ENCODE measurements at regions of chr10 and their contacts with region 1.

Region 1: GRCh38 chr10:70575874-70576802 is 26.4 kb downstream of the PRF1 start:
- DNase-seq: peak; percentile 46
- ATAC-seq: peak; percentile 10
- H3K4me3 Mint-ChIP-seq: no peak overlapping the region
- H3K27ac Mint-ChIP-seq: peak overlapping the region; percentile 40
- H3K4me1 Mint-ChIP-seq: peaks cover 44% of the 10 kb centered on the region
- H3K27me3 Mint-ChIP-seq: no peaks in the 10 kb centered on the region

Region 2: GRCh38 chr10:70169649-70170364 is 406.3 kb before region 1 on chr10:
- CTCF ChIA-PET with region 1: no interaction called
- POLR2A ChIA-PET with region 1: no interaction called
- intact Hi-C with region 1: loop called in 1 of 2 experiments (anchors 5 kb)
- DNase-seq: no peak
- ATAC-seq: peak; percentile 5
- H3K4me3 Mint-ChIP-seq: peak overlapping the region; percentile 94
- H3K27ac Mint-ChIP-seq: peak overlapping the region; percentile 84
- H3K4me1 Mint-ChIP-seq: peaks cover 64% of the 10 kb centered on the region
- H3K27me3 Mint-ChIP-seq: no peaks in the 10 kb centered on the region

Region 3: GRCh38 chr10:70404036-70404786 is 171.9 kb before region 1 on chr10 and contains the start of gene EIF4EBP2:
- CTCF ChIA-PET with region 1: no interaction called
- POLR2A ChIA-PET with region 1: no interaction called
- intact Hi-C with region 1: loop called in 1 of 2 experiments (anchors 5 kb)
- DNase-seq: peak; percentile 99
- ATAC-seq: peak; percentile 91
- H3K4me3 Mint-ChIP-seq: peak within 1 kb of the TSS; percentile 94
- H3K27ac Mint-ChIP-seq: peak within 1 kb of the TSS; percentile 91
- H3K4me1 Mint-ChIP-seq: peaks cover 37% of the 10 kb centered on the region
- H3K27me3 Mint-ChIP-seq: no peaks in the 10 kb centered on the region
- total RNA-seq, gene EIF4EBP2: 24.4 to 27.7 TPM

Region 4: GRCh38 chr10:70558871-70559810 is 17.0 kb before region 1 on chr10:
- CTCF ChIA-PET with region 1: interaction called, 3 read pairs
- POLR2A ChIA-PET with region 1: no interaction called
- intact Hi-C with region 1: loop called (anchors 1 to 2 kb)
- DNase-seq: peak; percentile 87
- ATAC-seq: peak; percentile 95
- H3K4me3 Mint-ChIP-seq: peak overlapping the region; percentile 60
- H3K27ac Mint-ChIP-seq: peak overlapping the region; percentile 23
- H3K4me1 Mint-ChIP-seq: peaks cover 12% of the 10 kb centered on the region
- H3K27me3 Mint-ChIP-seq: no peaks in the 10 kb centered on the region

Region 5: DNA sequence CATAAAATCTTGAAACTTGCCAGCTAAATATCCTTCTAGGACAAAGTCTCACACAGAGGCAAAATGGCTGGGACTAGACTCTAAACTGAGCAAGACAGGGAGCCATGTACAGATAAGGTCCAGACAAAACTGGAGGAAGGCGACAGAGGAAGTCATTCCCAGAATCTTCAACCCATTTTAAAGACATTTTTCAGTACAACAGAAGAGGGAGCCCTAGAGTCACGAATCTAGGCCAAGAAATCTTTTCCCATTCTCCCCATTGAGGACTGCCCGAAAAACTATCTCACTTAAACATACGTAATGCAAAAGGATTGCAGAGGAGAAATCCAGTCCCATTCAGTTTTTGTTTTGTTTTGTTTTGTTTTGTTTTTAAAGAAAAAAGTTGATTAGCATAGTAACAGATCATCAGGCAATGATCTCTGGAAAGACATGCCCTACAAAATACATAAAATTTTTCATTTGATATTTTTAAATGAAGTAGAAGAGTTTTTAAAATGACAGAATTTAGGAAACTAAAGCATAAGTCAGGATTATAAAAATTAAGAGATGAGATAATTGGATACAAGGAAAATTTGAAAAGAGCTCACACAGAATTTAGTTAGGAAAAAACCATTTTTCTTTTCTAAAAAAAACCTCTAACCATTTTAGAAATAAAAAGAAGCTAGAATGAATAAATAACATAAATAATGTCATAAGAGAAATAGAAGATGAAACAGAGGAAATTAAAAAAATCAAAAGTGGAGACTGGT is 43.3 kb after region 1 on chr10:
- CTCF ChIA-PET with region 1: interaction called, 5 read pairs
- POLR2A ChIA-PET with region 1: no interaction called
- intact Hi-C with region 1: loop called (anchors 1 to 5 kb)
- DNase-seq: no peak
- ATAC-seq: no peak
- H3K4me3 Mint-ChIP-seq: no peak overlapping the region
- H3K27ac Mint-ChIP-seq: no peak overlapping the region
- H3K4me1 Mint-ChIP-seq: peaks cover 16% of the 10 kb centered on the region
- H3K27me3 Mint-ChIP-seq: peaks cover 10% of the 10 kb centered on the region

Region 6: DNA sequence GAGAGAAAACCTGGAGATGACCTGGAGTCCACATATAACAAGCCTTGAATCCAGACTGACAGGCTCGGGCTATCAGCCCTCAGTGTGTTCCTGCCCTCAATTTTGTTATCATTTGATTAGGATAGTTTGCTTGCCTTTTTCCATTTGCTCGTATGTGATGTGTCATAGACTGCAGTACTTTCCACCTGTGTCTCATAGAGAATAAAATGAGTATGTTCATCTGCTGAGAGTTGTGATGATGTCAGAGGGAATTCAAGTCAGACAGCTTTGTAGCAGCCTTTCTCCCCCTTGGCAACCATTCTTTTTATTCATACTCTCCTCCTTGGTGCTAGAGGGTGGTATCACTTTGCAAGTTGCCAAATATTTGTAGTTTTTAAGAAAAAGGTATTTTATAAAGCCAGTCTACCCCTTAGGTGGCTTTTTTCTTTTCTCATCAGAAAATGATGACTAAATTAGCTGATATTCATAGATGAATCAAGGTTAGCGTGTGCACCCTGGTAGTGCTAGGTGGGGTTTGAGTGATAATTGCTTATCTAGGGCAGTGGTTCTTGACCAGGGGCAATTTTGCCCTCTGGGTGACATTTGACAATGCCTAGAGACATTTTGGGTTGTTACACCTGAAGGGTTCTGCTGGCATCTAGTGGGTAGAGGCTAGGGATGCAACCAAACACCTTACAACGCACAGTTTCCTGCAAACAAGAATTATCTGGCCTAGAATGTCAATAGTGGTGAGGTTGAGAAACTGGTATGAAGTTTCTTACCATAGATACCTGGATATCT is 245.0 kb after region 1 on chr10:
- CTCF ChIA-PET with region 1: interaction called, 3 read pairs
- POLR2A ChIA-PET with region 1: interaction called, 3 read pairs
- intact Hi-C with region 1: loop called in 1 of 2 experiments (anchors 1 kb)
- DNase-seq: peak; percentile 48
- ATAC-seq: peak; percentile 90
- H3K4me3 Mint-ChIP-seq: peak overlapping the region; percentile 37
- H3K27ac Mint-ChIP-seq: peak overlapping the region; percentile 86
- H3K4me1 Mint-ChIP-seq: peaks cover 64% of the 10 kb centered on the region
- H3K27me3 Mint-ChIP-seq: no peaks in the 10 kb centered on the region

Region 7: DNA sequence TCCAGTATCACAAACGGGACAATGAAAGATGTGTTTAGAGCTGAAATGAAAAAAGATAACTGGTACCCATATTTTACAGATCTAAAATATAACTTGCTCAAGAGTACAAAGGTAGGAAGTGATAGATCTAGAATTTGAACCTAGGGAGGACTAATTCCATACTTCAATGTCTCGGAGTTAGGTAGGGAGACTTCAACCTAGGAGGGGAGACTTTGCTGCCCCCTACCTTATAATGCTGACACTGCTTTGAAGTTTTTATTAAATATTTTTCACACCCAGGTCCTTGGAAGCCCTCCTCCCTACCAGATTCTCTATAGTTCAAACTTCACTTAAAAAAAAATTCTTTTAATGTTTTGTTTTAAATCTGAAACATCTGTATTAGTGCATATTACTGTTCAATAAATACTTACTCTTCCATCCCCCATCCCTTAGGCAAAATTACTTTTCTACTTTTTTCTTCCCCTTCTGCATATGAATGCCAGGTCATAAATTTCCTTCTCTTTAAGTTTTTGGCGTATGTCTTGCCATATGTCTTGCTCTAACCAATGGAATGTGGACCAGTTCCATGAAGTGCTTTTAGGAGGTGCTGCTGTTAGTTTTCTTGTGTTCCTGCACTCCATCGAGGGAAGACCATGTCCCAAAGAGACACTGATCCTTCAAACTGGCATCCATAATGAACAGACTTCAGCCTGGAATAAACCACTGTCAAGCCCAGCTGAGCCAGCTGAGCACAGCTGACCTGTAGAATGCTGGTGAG is 1991.9 kb after region 1 on chr10:
- CTCF ChIA-PET with region 1: no interaction called
- POLR2A ChIA-PET with region 1: no interaction called
- intact Hi-C with region 1: loop called in 1 of 2 experiments (anchors 10 kb)
- DNase-seq: no peak
- ATAC-seq: no peak
- H3K4me3 Mint-ChIP-seq: no peak overlapping the region
- H3K27ac Mint-ChIP-seq: no peak overlapping the region
- H3K4me1 Mint-ChIP-seq: peaks cover 17% of the 10 kb centered on the region
- H3K27me3 Mint-ChIP-seq: no peaks in the 10 kb centered on the region

Measured in activated CD4-positive, alpha-beta T cell treated with anti-CD3 and anti-CD28 coated beads for 36 hours (primary cell).